Mammary epithelial cell (primary cell): ENCODE measurements at regions of chr16 and their contacts with region 1.

Region 1: GRCh38 chr16:4475880-4476788 is at the start of gene HMOX2:
- DNase-seq: peak; percentile 93
- H3K4me3 ChIP-seq: peak within 1 kb of the TSS; percentile 72 to 86 (median 78)
- H3K27ac ChIP-seq: peak within 1 kb of the TSS; percentile 69
- H3K4me1 ChIP-seq: peaks cover 18% of the 10 kb centered on the region
- H3K27me3 ChIP-seq: no peaks in the 10 kb centered on the region
- CTCF ChIP-seq: peak; percentile 21 to 52
- total RNA-seq, gene HMOX2: 55.8 to 98.4 TPM

Region 2: DNA sequence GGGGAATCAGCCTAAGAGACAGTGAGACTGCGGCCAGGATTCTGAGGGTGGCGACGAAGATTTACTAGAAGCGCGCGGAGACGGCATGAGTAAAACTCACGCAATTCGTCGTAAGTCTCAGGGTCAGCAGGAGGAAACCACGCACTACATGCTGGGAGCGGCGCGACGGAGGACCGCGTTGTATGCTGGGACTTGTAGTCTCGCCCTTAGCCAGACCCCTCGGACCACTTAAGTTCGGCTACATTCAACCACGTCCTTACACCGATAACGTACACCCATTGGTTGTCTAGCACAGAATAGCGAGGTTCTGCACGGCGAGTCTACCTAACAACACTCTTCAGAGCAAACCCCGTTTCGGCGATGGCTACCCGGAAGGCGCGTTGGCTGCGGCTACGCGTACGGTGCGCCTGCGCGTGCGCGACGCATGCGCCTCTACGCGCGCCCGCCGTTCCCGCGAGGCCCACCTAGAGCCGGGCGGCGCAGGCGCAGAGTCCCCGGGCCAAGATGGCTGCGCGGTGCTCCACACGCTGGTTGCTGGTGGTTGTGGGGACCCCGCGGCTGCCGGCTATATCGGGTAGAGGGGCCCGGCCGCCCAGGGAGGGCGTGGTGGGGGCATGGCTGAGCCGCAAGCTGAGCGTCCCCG is 50.6 kb before region 1 on chr16 and contains the start of gene DNAJA3:
- CTCF ChIA-PET with region 1: no interaction called
- dilution Hi-C with region 1: no loop called
- in situ Hi-C with region 1: no loop called
- intact Hi-C with region 1: no loop called
- DNase-seq: peak; percentile 92
- H3K4me3 ChIP-seq: peak within 1 kb of the TSS; percentile 70 to 78 (median 75)
- H3K27ac ChIP-seq: peak within 1 kb of the TSS; percentile 91
- H3K4me1 ChIP-seq: peaks cover 13% of the 10 kb centered on the region
- H3K27me3 ChIP-seq: no peaks in the 10 kb centered on the region
- CTCF ChIP-seq: no peak
- total RNA-seq, gene DNAJA3: 52.7 to 70.4 TPM

Region 3: DNA sequence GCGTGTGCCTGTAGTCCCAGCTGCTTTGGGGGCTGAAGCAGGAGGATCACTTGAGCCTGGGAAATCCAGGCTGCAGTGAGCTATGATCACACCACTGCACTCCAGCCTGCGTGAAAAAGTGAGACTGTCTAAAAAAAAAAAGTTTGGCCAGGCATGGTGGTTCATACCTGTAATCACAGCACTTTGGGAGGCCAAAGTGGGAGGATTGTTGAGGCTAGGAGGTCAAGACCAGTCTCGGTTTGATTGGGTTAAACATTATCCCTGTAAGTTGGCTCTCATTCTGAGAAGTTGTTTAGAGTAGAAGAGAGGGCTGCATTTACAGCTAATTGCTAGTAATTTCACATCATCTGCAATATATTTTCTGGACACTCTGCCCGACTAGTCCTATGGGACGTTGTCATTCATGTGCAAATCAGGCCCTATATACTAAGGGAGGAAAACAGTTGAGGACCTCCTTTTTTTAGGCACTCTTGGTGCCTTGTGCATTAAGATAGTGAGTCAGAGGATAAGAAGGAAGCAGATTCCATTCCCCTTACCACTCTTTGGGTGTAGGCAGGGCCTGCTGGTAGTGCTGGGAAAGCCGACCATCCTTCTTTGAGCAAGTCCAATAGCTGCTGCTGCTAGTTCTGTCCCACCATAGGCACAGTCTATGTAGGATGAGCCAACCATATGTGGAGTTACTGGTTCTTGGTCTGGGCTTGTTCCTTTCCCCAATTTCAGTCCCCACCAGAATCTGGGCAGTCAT is 18.8 kb after region 1 on chr16:
- CTCF ChIA-PET with region 1: interaction called, 4 read pairs
- dilution Hi-C with region 1: no loop called
- in situ Hi-C with region 1: no loop called
- intact Hi-C with region 1: loop called (anchors 1 kb)
- DNase-seq: peak; percentile 78
- H3K4me3 ChIP-seq: no peak overlapping the region
- H3K27ac ChIP-seq: peak overlapping the region; percentile 72
- H3K4me1 ChIP-seq: peaks cover 53% of the 10 kb centered on the region
- H3K27me3 ChIP-seq: no peaks in the 10 kb centered on the region
- CTCF ChIP-seq: no peak